ENCODE measurements at regions of chr19 and their contacts with region 1.

Region 1: GRCh38 chr19:49200238-49200862 is 42.8 kb downstream of the TRPM4 start:
- DNase-seq: peak; percentile 36
- ATAC-seq: peak; percentile 71
- H3K4me3 Mint-ChIP-seq: no peak overlapping the region
- H3K27ac Mint-ChIP-seq: no peak overlapping the region
- H3K4me1 Mint-ChIP-seq: peaks cover 2% of the 10 kb centered on the region
- H3K27me3 Mint-ChIP-seq: no peaks in the 10 kb centered on the region
- CTCF ChIP-seq: no peak

Region 2: DNA sequence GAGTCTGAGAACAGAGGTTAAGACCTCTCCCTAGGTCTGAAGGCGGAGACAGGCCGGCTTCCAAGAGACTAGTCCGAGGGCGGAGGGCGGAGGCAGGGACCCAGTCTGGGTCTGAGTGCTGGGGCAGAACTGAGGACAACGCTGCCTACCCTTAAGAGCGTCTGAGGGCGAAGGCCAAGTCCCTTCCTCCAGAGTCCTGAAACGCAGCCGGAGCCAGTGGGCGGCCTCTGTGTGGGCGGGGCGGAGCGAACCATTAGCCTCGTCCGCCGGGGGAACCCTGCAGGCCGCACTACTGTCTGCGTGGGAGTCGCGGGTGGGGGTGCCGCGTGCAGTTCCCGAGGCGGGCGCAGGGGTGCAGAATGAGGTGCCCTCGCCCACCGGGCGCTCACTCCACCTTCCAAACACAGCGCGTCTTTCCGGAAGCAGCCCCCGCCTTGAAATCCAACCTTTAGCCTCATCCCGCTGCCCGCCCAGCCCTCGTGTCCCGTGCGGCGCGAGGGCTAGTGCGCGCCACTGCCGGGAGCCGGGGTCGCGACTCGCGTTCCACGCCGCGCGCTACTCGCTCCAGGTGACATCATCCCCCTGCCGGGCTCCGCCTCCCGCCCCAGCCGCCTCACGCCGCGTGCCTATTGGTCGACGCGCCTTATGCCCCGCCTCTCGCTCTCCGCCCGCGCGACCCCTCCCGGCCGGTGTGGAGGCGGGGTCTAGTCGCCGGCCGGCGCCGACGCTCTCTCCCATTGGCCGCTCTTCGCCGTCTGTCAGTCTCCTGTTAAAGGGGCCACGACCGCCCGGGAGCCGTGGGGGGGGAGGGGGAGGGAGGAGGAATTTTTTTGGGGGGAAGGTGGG is 81.6 kb before region 1 on chr19 and contains the start of gene C19orf73:
- CTCF ChIA-PET with region 1: interaction called, 18 read pairs
- POLR2A ChIA-PET with region 1: no interaction called
- intact Hi-C with region 1: no loop called
- DNase-seq: peak; percentile 95
- ATAC-seq: peak; percentile 89
- H3K4me3 Mint-ChIP-seq: peak within 1 kb of the TSS; percentile 88
- H3K27ac Mint-ChIP-seq: peak within 1 kb of the TSS; percentile 91
- H3K4me1 Mint-ChIP-seq: peaks cover 28% of the 10 kb centered on the region
- H3K27me3 Mint-ChIP-seq: peaks cover 10% of the 10 kb centered on the region
- CTCF ChIP-seq: no peak
- total RNA-seq, gene C19orf73: 1.5 to 2.0 TPM

Region 3: GRCh38 chr19:49161987-49162386 is 38.4 kb before region 1 on chr19:
- CTCF ChIA-PET with region 1: interaction called, 19 read pairs
- POLR2A ChIA-PET with region 1: interaction called, 3 read pairs
- intact Hi-C with region 1: no loop called
- DNase-seq: no peak
- ATAC-seq: no peak
- H3K4me3 Mint-ChIP-seq: no peak overlapping the region
- H3K27ac Mint-ChIP-seq: no peak overlapping the region
- H3K4me1 Mint-ChIP-seq: peaks cover 7% of the 10 kb centered on the region
- H3K27me3 Mint-ChIP-seq: peaks cover 30% of the 10 kb centered on the region
- CTCF ChIP-seq: no peak

Region 4: GRCh38 chr19:49216071-49216470 is 15.7 kb after region 1 on chr19:
- CTCF ChIA-PET with region 1: interaction called, 18 read pairs
- POLR2A ChIA-PET with region 1: no interaction called
- intact Hi-C with region 1: no loop called
- DNase-seq: no peak
- ATAC-seq: no peak
- H3K4me3 Mint-ChIP-seq: no peak overlapping the region
- H3K27ac Mint-ChIP-seq: no peak overlapping the region
- H3K4me1 Mint-ChIP-seq: peaks cover 6% of the 10 kb centered on the region
- H3K27me3 Mint-ChIP-seq: peaks cover 2% of the 10 kb centered on the region
- CTCF ChIP-seq: no peak